Right ventricle myocardium inferior (tissue), 1 donor: ENCODE measurements at regions of chr15 and their contacts with region 1.

Region 1: DNA sequence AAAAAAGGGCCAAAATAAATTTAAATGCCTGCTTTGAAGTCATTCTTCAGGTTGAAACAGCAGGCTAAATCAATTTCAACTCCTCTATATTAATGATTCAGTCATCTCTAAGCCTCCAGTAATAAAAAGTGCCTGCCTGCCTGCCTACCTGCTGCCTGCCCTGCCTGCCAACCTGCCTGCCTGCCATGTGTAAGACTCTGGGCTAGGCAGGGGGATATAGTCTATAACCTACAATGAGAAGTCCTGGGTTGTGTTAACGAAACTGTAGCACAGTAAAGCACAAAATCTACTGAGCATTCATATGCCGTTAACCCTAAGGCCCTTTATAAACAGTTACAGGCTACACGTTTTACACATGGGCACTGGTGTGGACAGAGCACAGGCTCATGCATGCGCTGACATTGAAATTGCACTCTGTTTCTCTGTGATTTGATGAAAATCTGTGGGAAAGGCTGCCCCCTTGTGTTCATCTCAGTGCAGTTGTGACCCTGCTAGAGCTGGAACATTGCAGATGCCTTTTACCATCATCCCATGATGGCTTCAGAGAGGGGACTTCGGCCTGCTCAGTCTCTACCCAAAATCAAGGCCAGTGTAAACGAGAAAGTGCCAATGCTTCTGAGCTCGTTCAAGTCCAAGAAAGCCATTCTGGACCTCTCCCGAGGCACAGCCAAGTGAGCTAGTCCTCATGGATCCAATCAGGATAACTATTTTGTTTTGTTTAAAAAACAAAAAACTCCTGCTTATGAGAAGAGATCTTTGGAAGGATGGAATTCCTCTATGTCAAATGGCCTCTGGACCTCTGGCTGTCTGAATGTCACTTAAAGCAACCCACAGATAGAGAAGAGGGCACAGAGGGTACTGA is 64.6 kb downstream of the EFL1 start:
- DNase-seq: no peak
- ATAC-seq: peak; percentile 88

Region 2: DNA sequence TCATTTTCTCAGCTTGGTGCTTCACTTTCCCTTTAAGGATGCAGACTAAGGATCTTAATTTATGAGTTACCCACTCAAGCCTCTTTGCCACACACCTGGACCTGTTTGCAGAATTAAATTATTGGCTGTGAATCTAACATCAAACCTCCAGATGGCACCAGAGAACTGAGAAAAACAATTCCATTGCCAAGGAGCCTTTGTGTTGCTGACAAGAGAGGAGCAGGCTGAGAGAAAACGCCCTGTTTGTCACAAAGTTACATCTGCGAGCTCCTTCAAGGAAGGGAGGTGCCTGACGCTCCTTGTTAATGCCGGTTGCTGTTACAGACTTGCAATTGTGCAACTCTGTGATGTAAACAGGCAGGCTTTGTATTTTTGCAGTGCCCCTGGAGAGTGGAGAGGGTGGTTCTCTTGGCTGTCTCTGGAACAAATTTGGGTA is 787.6 kb before region 1 on chr15:
- intact Hi-C with region 1: loop called (anchors 2 kb)
- DNase-seq: peak; percentile 65
- ATAC-seq: peak; percentile 89

Region 3: GRCh38 chr15:82108489-82109078 is 89.4 kb before region 1 on chr15:
- intact Hi-C with region 1: loop called (anchors 1 kb)
- DNase-seq: no peak
- ATAC-seq: peak; percentile 86

Region 4: DNA sequence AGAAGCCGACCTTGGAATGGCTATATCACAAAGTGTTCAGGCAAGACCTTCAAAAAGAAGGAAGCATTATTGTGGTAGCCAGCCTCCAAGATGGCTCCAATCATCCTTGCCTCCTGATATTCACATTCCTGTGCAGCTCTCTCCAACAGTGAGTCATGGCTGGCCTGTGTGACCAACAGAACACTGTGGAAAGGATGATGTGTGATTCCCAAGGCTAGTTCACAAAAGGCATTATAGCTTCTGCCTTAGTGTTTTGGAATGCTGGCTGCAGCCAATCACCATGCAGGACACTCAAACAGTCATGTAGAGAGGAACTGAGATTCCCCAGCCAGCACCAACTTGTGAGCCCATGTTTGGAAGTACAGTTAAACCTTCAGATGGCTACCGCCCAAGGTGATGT is 38.0 kb before region 1 on chr15:
- intact Hi-C with region 1: no loop called
- DNase-seq: no peak
- ATAC-seq: no peak

Region 5: GRCh38 chr15:82726816-82727215 is 528.9 kb after region 1 on chr15:
- intact Hi-C with region 1: no loop called
- DNase-seq: no peak
- ATAC-seq: no peak